ENCODE measurements at regions of chrX and their contacts with region 1.

Region 1: GRCh38 chrX:23667239-23668177 is at the start of gene PRDX4:
- DNase-seq: peak; percentile 60
- H3K4me3 Mint-ChIP-seq: peak within 1 kb of the TSS; percentile 86
- H3K27ac Mint-ChIP-seq: peak within 1 kb of the TSS; percentile 83
- H3K4me1 Mint-ChIP-seq: peaks cover 20% of the 10 kb centered on the region
- H3K27me3 Mint-ChIP-seq: no peaks in the 10 kb centered on the region
- total RNA-seq, gene PRDX4: 59.0 and 68.0 TPM in 2 replicates

Region 2: GRCh38 chrX:23616361-23616760 is 51.1 kb before region 1 on chrX:
- intact Hi-C with region 1: no loop called
- DNase-seq: no peak
- H3K4me3 Mint-ChIP-seq: no peak overlapping the region
- H3K27ac Mint-ChIP-seq: no peak overlapping the region
- H3K4me1 Mint-ChIP-seq: no peaks in the 10 kb centered on the region
- H3K27me3 Mint-ChIP-seq: peaks cover 2% of the 10 kb centered on the region

Region 3: DNA sequence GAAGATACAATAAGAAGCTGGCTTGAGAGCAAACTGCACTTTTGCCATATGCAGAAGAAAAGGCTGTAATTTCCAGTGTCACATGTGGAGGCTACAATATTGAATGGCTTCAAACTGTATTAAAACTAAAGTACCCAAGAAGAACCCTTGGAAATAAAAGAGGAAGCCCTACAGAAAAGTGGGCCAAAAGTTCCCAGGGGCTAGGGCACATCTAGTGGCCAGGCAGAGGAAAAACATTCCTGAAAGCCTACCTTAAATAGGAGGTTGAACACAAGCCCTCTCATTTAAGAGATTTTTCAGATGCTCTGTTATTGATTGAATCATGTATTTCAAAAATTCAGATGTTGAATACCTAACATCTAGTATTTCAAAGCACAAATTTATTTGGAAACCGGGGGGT is 40.9 kb before region 1 on chrX:
- intact Hi-C with region 1: no loop called
- DNase-seq: no peak
- H3K4me3 Mint-ChIP-seq: no peak overlapping the region
- H3K27ac Mint-ChIP-seq: no peak overlapping the region
- H3K4me1 Mint-ChIP-seq: no peaks in the 10 kb centered on the region
- H3K27me3 Mint-ChIP-seq: peaks cover 5% of the 10 kb centered on the region

Region 4: GRCh38 chrX:23742697-23743622 is 75.5 kb after region 1 on chrX and contains the start of gene ACOT9:
- intact Hi-C with region 1: loop called (anchors 2 kb)
- DNase-seq: peak; percentile 75
- H3K4me3 Mint-ChIP-seq: peak within 1 kb of the TSS; percentile 94
- H3K27ac Mint-ChIP-seq: peak within 1 kb of the TSS; percentile 90
- H3K4me1 Mint-ChIP-seq: peaks cover 19% of the 10 kb centered on the region
- H3K27me3 Mint-ChIP-seq: no peaks in the 10 kb centered on the region
- total RNA-seq, gene ACOT9: 75.2 and 76.0 TPM in 2 replicates

Region 5: DNA sequence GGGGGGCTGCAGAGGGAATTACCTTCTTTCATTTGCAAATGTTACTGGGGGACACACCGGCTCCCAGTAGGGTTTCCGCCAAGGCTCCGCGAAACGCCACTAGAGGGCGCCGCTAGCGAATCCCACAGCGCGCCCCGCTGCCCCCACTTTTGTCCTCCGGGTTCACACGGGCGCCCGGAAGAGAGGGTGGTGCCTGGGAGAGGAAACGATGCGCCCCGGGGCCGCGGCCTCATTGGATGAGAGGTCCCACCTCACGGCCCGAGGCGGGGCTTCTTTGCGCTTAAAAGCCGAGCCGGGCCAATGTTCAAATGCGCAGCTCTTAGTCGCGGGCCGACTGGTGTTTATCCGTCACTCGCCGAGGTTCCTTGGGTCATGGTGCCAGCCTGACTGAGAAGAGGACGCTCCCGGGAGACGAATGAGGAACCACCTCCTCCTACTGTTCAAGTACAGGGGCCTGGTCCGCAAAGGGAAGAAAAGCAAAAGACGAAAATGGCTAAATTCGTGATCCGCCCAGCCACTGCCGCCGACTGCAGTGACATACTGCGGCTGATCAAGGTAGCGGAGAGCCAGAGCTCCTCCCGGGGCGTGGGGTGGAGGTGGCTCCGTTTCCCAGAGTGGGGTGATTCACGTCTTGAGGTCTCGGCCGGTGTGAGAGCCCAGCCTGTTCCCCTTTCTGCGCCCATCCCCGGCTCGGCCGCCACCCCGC is 115.5 kb after region 1 on chrX and contains the start of gene SAT1:
- intact Hi-C with region 1: loop called (anchors 1 kb)
- DNase-seq: peak; percentile 90
- H3K4me3 Mint-ChIP-seq: peak within 1 kb of the TSS; percentile 90
- H3K27ac Mint-ChIP-seq: peak within 1 kb of the TSS; percentile 96
- H3K4me1 Mint-ChIP-seq: peaks cover 31% of the 10 kb centered on the region
- H3K27me3 Mint-ChIP-seq: no peaks in the 10 kb centered on the region
- total RNA-seq, gene SAT1: 76.7 and 78.8 TPM in 2 replicates

Region 6: GRCh38 chrX:24024819-24025740 is 357.6 kb after region 1 on chrX:
- intact Hi-C with region 1: loop called (anchors 10 kb)
- DNase-seq: peak; percentile 76
- H3K4me3 Mint-ChIP-seq: peak overlapping the region; percentile 91
- H3K27ac Mint-ChIP-seq: peak overlapping the region; percentile 55
- H3K4me1 Mint-ChIP-seq: peaks cover 22% of the 10 kb centered on the region
- H3K27me3 Mint-ChIP-seq: peaks cover 3% of the 10 kb centered on the region

Region 7: GRCh38 chrX:24479924-24480323 is 812.4 kb after region 1 on chrX:
- intact Hi-C with region 1: loop called (anchors 1 kb)
- DNase-seq: peak; percentile 73
- H3K4me3 Mint-ChIP-seq: peak overlapping the region; percentile 70
- H3K27ac Mint-ChIP-seq: peak overlapping the region; percentile 92
- H3K4me1 Mint-ChIP-seq: peaks cover 45% of the 10 kb centered on the region
- H3K27me3 Mint-ChIP-seq: no peaks in the 10 kb centered on the region

Measured in activated T-helper 2 cell treated with anti-CD3 and anti-CD28 coated beads, Interferon-gamma antibody, Interleukin-2, Interleukin-4, amounts not matched to agents 10 μg/mL and 5 μg/mL and 100 μg/mL, durations not matched to agents 14 hours and 24 hours and 36 hours (primary cell).